Calu3 (cell line): ENCODE measurements at regions of chr1 and their contacts with region 1.

Region 1: GRCh38 chr1:39538588-39539465 is 37.8 kb downstream of the PABPC4 start:
- DNase-seq: peak; percentile 73
- H3K4me3 Mint-ChIP-seq: no peak overlapping the region
- H3K27ac Mint-ChIP-seq: peak overlapping the region; percentile 6
- H3K4me1 Mint-ChIP-seq: no peaks in the 10 kb centered on the region
- H3K27me3 Mint-ChIP-seq: no peaks in the 10 kb centered on the region
- CTCF ChIP-seq: peak; percentile 70

Region 2: GRCh38 chr1:39268112-39268581 is 270.7 kb before region 1 on chr1:
- CTCF ChIA-PET with region 1: no interaction called
- intact Hi-C with region 1: loop called (anchors 1 kb)
- DNase-seq: no peak
- H3K4me3 Mint-ChIP-seq: no peak overlapping the region
- H3K27ac Mint-ChIP-seq: no peak overlapping the region
- H3K4me1 Mint-ChIP-seq: peaks cover 18% of the 10 kb centered on the region
- H3K27me3 Mint-ChIP-seq: no peaks in the 10 kb centered on the region
- CTCF ChIP-seq: no peak

Region 3: GRCh38 chr1:39344394-39345154 is 194.3 kb before region 1 on chr1:
- CTCF ChIA-PET with region 1: no interaction called
- intact Hi-C with region 1: no loop called
- DNase-seq: peak; percentile 3
- H3K4me3 Mint-ChIP-seq: no peak overlapping the region
- H3K27ac Mint-ChIP-seq: no peak overlapping the region
- H3K4me1 Mint-ChIP-seq: peaks cover 7% of the 10 kb centered on the region
- H3K27me3 Mint-ChIP-seq: no peaks in the 10 kb centered on the region
- CTCF ChIP-seq: no peak

Region 4: GRCh38 chr1:39632682-39633417 is 94.0 kb after region 1 on chr1:
- CTCF ChIA-PET with region 1: no interaction called
- intact Hi-C with region 1: no loop called
- DNase-seq: peak; percentile 49
- H3K4me3 Mint-ChIP-seq: no peak overlapping the region
- H3K27ac Mint-ChIP-seq: no peak overlapping the region
- H3K4me1 Mint-ChIP-seq: peaks cover 7% of the 10 kb centered on the region
- H3K27me3 Mint-ChIP-seq: peaks cover 88% of the 10 kb centered on the region
- CTCF ChIP-seq: no peak